ENCODE measurements at regions of chr17 and their contacts with region 1.

Region 1: GRCh38 chr17:7351665-7352501 is at the start of gene KCTD11:
- DNase-seq: peak; percentile 73
- ATAC-seq: peak; percentile 76
- H3K4me3 ChIP-seq: peak within 1 kb of the TSS; percentile 64 to 88 (median 87)
- H3K27ac ChIP-seq: peak within 1 kb of the TSS; percentile 95
- H3K4me1 ChIP-seq: peaks cover 55% of the 10 kb centered on the region
- H3K27me3 ChIP-seq: peaks cover 0 to 5% of the 10 kb centered on the region in 2 experiments; a peak in 2 of 5 replicates
- CTCF ChIP-seq: peak; percentile 66
- EP300 ChIP-seq: no peak
- POLR2A ChIP-seq: peak in 1 of 2 experiments; percentile 84; a peak in 3 of 4 replicates
- RAD21 ChIP-seq: peak; percentile 58; the same call in 1 of the 2 replicates
- total RNA-seq, gene KCTD11: 1.3 and 1.6 TPM in 2 replicates

Region 2: DNA sequence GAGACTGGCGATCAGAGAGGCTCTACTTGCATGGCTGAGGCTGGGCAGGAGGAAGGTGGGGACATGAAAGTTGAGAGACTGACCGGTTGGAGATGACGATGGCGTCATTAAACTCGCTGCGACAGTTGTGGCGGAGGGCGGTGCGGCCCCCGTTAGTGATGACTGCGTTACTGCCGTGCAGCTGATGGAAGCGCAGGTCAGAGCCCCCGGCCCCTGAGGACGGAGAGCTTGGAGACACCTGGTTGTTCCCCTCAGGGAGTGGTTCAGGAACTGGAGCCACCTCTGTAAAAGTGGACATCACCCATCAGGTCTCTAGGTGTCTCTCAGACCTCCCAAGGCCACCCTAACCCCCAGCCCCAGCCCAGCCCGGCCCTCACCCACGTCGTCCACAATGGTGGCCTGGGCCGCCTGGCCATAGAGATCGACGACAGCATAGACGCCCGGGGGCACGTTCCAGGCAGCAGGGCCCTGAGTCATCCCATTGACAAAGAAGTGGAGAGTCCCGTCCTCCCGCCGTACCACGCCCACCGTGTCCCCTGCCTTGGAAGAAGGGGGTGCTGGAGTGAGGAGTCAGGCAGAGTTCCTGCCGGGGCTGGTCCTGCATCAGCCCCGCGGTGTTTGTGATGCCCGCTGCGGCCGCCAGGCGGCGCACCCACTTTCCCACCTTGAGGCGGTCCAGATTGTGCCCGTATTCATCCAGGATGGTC is 28.0 kb before region 1 on chr17:
- CTCF ChIA-PET with region 1: interaction called, 41 read pairs
- POLR2A ChIA-PET with region 1: interaction called, 14 read pairs
- in situ Hi-C with region 1: no loop called
- intact Hi-C with region 1: loop called (anchors 2 kb)
- DNase-seq: no peak
- ATAC-seq: peak; percentile 66
- H3K4me3 ChIP-seq: no peak overlapping the region
- H3K27ac ChIP-seq: no peak overlapping the region
- H3K4me1 ChIP-seq: peaks cover 16% of the 10 kb centered on the region
- H3K27me3 ChIP-seq: no peaks in the 10 kb centered on the region; a peak in 1 of 5 replicates
- CTCF ChIP-seq: peak; percentile 79
- EP300 ChIP-seq: no peak
- POLR2A ChIP-seq: no peak
- RAD21 ChIP-seq: peak; percentile 78

Region 3: GRCh38 chr17:7435221-7435675 is 83.4 kb after region 1 on chr17 and contains the start of gene TMEM102:
- CTCF ChIA-PET with region 1: interaction called, 11 read pairs
- POLR2A ChIA-PET with region 1: no interaction called
- in situ Hi-C with region 1: loop called (anchors 5 kb)
- intact Hi-C with region 1: no loop called
- DNase-seq: peak; percentile 97
- ATAC-seq: peak; percentile 85
- H3K4me3 ChIP-seq: peak within 1 kb of the TSS; percentile 62 to 75 (median 72)
- H3K27ac ChIP-seq: peak within 1 kb of the TSS; percentile 13
- H3K4me1 ChIP-seq: peaks cover 24% of the 10 kb centered on the region
- H3K27me3 ChIP-seq: no peaks in the 10 kb centered on the region; a peak in 1 of 5 replicates
- CTCF ChIP-seq: 0 out of 2 replicates have a peak, but pooled peaks have one; percentile 6
- EP300 ChIP-seq: no peak
- POLR2A ChIP-seq: no peak
- RAD21 ChIP-seq: no peak
- total RNA-seq, gene TMEM102: 2.0 and 3.1 TPM in 2 replicates

Region 4: GRCh38 chr17:7484067-7484918 is 132.4 kb after region 1 on chr17 and contains the start of gene POLR2A:
- CTCF ChIA-PET with region 1: no interaction called
- POLR2A ChIA-PET with region 1: interaction called, 9 read pairs
- in situ Hi-C with region 1: no loop called
- intact Hi-C with region 1: loop called (anchors 5 kb)
- DNase-seq: peak; percentile 96
- ATAC-seq: peak; percentile 72
- H3K4me3 ChIP-seq: peak within 1 kb of the TSS; percentile 75 to 92 (median 90)
- H3K27ac ChIP-seq: peak within 1 kb of the TSS; percentile 100
- H3K4me1 ChIP-seq: peaks cover 65% of the 10 kb centered on the region
- H3K27me3 ChIP-seq: no peaks in the 10 kb centered on the region; a peak in 2 of 5 replicates
- CTCF ChIP-seq: no peak
- EP300 ChIP-seq: peak; percentile 44 to 51; a peak in 2 of 4 replicates
- POLR2A ChIP-seq: peak; percentile 100
- RAD21 ChIP-seq: peak; percentile 44; the same call in 1 of the 2 replicates
- total RNA-seq, gene POLR2A: 17.8 and 63.2 TPM in 2 replicates

Region 5: GRCh38 chr17:7502987-7503386 is 151.1 kb after region 1 on chr17:
- CTCF ChIA-PET with region 1: no interaction called
- POLR2A ChIA-PET with region 1: no interaction called
- in situ Hi-C with region 1: no loop called
- intact Hi-C with region 1: loop called (anchors 5 kb)
- DNase-seq: no peak
- ATAC-seq: peak; percentile 64
- H3K4me3 ChIP-seq: no peak overlapping the region
- H3K27ac ChIP-seq: no peak overlapping the region
- H3K4me1 ChIP-seq: no peaks in the 10 kb centered on the region
- H3K27me3 ChIP-seq: no peaks in the 10 kb centered on the region
- CTCF ChIP-seq: peak; percentile 64
- EP300 ChIP-seq: no peak
- POLR2A ChIP-seq: no peak
- RAD21 ChIP-seq: peak; percentile 50; the same call in 1 of the 2 replicates

Region 6: GRCh38 chr17:7515911-7516610 is 164.2 kb after region 1 on chr17:
- CTCF ChIA-PET with region 1: no interaction called
- POLR2A ChIA-PET with region 1: no interaction called
- in situ Hi-C with region 1: no loop called
- intact Hi-C with region 1: no loop called
- DNase-seq: peak; percentile 20
- ATAC-seq: no peak
- H3K4me3 ChIP-seq: no peak overlapping the region
- H3K27ac ChIP-seq: no peak overlapping the region
- H3K4me1 ChIP-seq: peaks cover 5% of the 10 kb centered on the region
- H3K27me3 ChIP-seq: no peaks in the 10 kb centered on the region
- CTCF ChIP-seq: no peak
- EP300 ChIP-seq: no peak
- POLR2A ChIP-seq: no peak
- RAD21 ChIP-seq: no peak